ENCODE measurements at regions of chr13 and their contacts with region 1.

Region 1: DNA sequence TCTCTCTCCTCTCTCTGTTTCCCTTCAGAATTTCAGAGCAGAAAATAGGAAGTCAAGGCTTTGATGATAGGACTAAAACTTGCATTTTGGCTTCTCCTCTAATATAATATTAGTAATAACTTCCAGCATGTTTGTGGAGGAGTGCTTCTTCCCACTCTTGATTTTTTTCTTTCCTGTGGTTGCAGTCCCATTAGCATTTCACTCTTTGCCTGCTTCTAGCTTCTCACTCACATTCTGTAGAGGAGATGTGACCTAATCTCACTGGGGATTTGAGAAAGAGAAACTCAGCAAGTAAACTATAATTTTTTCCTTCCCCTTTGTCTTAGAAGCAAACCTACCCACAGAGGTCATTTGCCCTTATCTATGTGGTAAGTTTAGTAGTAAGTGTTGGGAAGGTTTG is 169.4 kb upstream of the HTR2A start:
- DNase-seq: no peak
- ATAC-seq: no peak
- H3K4me3 ChIP-seq: no peak overlapping the region
- H3K27ac ChIP-seq: no peak overlapping the region
- H3K4me1 ChIP-seq: no peaks in the 10 kb centered on the region
- H3K27me3 ChIP-seq: no peaks in the 10 kb centered on the region

Region 2: GRCh38 chr13:46934749-46935148 is 131.5 kb before region 1 on chr13:
- intact Hi-C with region 1: no loop called
- DNase-seq: no peak
- ATAC-seq: no peak
- H3K4me3 ChIP-seq: no peak overlapping the region
- H3K27ac ChIP-seq: no peak overlapping the region
- H3K4me1 ChIP-seq: no peaks in the 10 kb centered on the region
- H3K27me3 ChIP-seq: no peaks in the 10 kb centered on the region

Region 3: DNA sequence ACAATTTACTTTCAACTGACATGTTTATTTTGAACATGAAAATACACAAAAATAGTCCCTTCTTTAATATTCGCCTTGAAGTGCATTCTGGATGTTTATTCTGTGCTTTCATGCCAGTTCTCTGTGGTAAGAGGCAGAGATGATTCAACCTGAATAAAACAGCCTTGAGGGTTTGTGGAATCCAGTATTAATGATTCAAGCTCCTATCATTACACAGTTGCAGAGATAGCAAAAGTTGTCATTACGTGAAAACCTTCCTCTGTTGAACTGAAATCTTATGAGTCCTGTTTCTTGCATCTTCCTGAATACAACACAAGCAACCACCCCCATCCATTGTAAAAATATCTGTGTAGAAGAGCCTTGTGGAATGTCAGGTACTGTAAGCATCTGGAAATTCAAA is 27.1 kb before region 1 on chr13:
- intact Hi-C with region 1: loop called in 1 of 4 experiments (anchors 2 kb)
- DNase-seq: no peak
- ATAC-seq: no peak
- H3K4me3 ChIP-seq: no peak overlapping the region
- H3K27ac ChIP-seq: no peak overlapping the region
- H3K4me1 ChIP-seq: no peaks in the 10 kb centered on the region
- H3K27me3 ChIP-seq: no peaks in the 10 kb centered on the region